ENCODE measurements at regions of chr16 and their contacts with region 1.

Region 1: GRCh38 chr16:48609652-48610029 is 339 bp downstream of the N4BP1 start:
- DNase-seq: no peak
- ATAC-seq: peak; percentile 24
- H3K4me3 Mint-ChIP-seq: no peak overlapping the region
- H3K27ac Mint-ChIP-seq: no peak overlapping the region
- H3K4me1 Mint-ChIP-seq: peaks cover 39% of the 10 kb centered on the region
- H3K27me3 Mint-ChIP-seq: no peaks in the 10 kb centered on the region

Region 2: DNA sequence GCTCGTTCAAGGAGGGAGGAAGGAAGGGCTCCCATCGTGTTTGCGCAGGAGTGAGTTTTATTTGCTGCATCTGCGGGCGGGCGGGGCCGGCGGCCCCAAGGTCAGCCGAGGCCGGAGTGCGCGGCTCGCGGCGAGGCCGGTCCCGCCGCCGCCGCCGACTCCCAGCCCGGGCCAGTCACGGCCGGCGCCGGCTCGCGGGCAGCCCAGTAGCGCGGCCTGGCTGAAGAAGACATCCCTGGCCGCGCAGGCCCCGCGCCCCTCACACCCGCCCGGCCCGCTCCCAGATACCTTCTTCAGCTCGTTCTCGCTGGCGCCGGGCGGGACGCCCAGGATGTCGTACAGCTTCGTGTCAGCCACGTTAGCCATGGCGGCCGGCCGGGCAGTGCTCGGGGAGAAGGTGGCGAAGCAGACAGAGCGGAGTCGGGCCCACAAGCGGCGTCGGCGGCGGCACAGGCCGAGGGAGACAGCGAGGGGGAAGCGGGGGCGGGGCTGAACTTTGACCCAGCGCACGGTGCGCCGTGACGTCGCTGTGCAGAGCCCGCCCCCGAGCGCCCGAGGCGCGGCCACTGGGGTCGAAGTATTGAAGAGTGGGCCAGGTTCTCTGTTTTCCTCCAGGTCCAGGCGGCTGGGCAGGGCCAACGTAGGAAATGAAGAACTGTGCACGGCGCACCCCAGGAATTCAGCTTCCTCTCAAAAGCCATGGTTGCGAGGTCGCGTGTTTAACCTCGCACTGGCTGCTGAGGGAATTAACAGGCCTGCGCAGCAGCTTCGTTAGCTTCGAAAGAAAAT is 1636.2 kb before region 1 on chr16 and contains the start of gene DNAJA2:
- CTCF ChIA-PET with region 1: no interaction called
- POLR2A ChIA-PET with region 1: no interaction called
- intact Hi-C with region 1: loop called in 1 of 2 experiments (anchors 2 kb)
- DNase-seq: peak; percentile 96
- ATAC-seq: peak; percentile 87
- H3K4me3 Mint-ChIP-seq: peak within 1 kb of the TSS; percentile 85
- H3K27ac Mint-ChIP-seq: peak within 1 kb of the TSS; percentile 99
- H3K4me1 Mint-ChIP-seq: peaks cover 56% of the 10 kb centered on the region
- H3K27me3 Mint-ChIP-seq: no peaks in the 10 kb centered on the region
- total RNA-seq, gene DNAJA2: 57.2 to 71.2 TPM

Region 3: DNA sequence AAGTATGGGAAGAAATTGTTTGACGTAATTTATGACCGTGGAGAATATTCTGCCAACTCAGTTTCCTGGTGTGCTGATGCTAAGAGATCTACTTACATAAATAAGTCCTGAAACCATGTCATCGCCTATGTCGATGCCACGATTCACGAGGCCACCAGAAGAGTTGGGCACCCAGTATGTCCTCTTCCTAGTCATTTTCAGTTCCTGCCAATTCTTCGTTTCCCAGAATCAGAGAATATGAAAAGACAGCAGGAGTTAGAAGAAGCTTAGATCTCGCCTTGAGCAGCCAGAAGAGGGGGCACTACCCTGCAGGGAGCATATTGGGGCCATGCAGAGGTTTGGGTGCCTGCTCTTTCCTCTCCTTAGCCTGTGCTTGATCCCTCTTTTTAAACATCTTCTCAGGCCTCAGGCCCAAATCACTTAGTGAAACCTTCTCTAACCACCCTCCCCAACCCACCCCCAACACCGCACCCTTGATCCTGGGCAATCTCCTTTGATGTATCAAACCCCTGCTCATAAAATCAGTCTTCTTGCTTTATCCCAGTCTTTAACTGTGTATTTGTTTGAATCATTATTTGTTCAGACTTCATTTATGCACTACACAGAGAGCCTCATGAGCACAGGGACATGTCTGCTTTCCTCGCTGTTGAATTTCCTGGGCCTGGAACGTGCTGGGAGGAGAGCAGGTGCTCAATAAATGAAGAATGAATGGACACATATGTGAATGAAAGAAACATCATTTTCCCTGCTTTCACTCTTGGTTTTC is 377.7 kb before region 1 on chr16:
- CTCF ChIA-PET with region 1: no interaction called
- POLR2A ChIA-PET with region 1: no interaction called
- intact Hi-C with region 1: loop called in 1 of 2 experiments (anchors 1 kb)
- DNase-seq: peak; percentile 72
- ATAC-seq: peak; percentile 83
- H3K4me3 Mint-ChIP-seq: peak overlapping the region; percentile 20
- H3K27ac Mint-ChIP-seq: peak overlapping the region; percentile 65
- H3K4me1 Mint-ChIP-seq: peaks cover 22% of the 10 kb centered on the region
- H3K27me3 Mint-ChIP-seq: peaks cover 5% of the 10 kb centered on the region

Region 4: GRCh38 chr16:48385272-48386150 is 224.1 kb before region 1 on chr16 and contains the start of gene SIAH1:
- CTCF ChIA-PET with region 1: interaction called, 3 read pairs
- POLR2A ChIA-PET with region 1: interaction called, 3 read pairs
- intact Hi-C with region 1: loop called (anchors 1 to 2 kb)
- DNase-seq: peak; percentile 91
- ATAC-seq: peak; percentile 82
- H3K4me3 Mint-ChIP-seq: peak within 1 kb of the TSS; percentile 85
- H3K27ac Mint-ChIP-seq: peak within 1 kb of the TSS; percentile 90
- H3K4me1 Mint-ChIP-seq: peaks cover 21% of the 10 kb centered on the region
- H3K27me3 Mint-ChIP-seq: no peaks in the 10 kb centered on the region
- total RNA-seq, gene SIAH1: 13.1 to 13.3 TPM

Region 5: DNA sequence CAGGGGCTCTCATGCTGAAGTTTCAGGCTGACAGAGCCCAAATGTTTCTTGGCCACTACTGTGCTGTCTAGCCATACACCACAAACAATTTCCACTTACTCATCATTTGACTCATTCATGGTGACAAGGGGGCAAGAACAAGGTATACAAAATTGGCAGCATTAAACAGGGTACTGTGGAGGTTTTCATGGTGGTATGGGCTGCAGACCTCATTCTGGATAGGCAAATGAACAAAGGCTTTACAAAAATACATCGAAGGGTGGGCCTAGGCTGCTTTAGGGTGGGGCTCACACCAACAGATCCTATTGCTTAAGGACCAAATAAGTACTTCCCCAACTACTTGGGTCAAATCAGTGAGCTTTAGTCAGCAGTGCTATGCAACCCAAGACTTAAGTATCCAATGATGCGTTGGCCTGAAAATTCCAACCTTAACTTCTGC is 52.7 kb before region 1 on chr16:
- CTCF ChIA-PET with region 1: interaction called, 4 read pairs
- POLR2A ChIA-PET with region 1: no interaction called
- intact Hi-C with region 1: loop called (anchors 1 to 2 kb)
- DNase-seq: peak; percentile 52
- ATAC-seq: peak; percentile 89
- H3K4me3 Mint-ChIP-seq: no peak overlapping the region
- H3K27ac Mint-ChIP-seq: peak overlapping the region; percentile 64
- H3K4me1 Mint-ChIP-seq: peaks cover 83% of the 10 kb centered on the region
- H3K27me3 Mint-ChIP-seq: no peaks in the 10 kb centered on the region

Region 6: GRCh38 chr16:48623304-48624016 is 13.8 kb after region 1 on chr16:
- CTCF ChIA-PET with region 1: interaction called, 51 read pairs
- POLR2A ChIA-PET with region 1: interaction called, 15 read pairs
- intact Hi-C with region 1: loop called in 1 of 2 experiments (anchors 1 kb)
- DNase-seq: peak; percentile 90
- ATAC-seq: peak; percentile 97
- H3K4me3 Mint-ChIP-seq: peak overlapping the region; percentile 68
- H3K27ac Mint-ChIP-seq: peak overlapping the region; percentile 77
- H3K4me1 Mint-ChIP-seq: peaks cover 19% of the 10 kb centered on the region
- H3K27me3 Mint-ChIP-seq: no peaks in the 10 kb centered on the region

Region 7: GRCh38 chr16:48676836-48677235 is 67.2 kb after region 1 on chr16:
- CTCF ChIA-PET with region 1: no interaction called
- POLR2A ChIA-PET with region 1: no interaction called
- intact Hi-C with region 1: no loop called
- DNase-seq: no peak
- ATAC-seq: no peak
- H3K4me3 Mint-ChIP-seq: no peak overlapping the region
- H3K27ac Mint-ChIP-seq: no peak overlapping the region
- H3K4me1 Mint-ChIP-seq: no peaks in the 10 kb centered on the region
- H3K27me3 Mint-ChIP-seq: no peaks in the 10 kb centered on the region

Region 8: GRCh38 chr16:49725651-49726050 is 1116.0 kb after region 1 on chr16:
- CTCF ChIA-PET with region 1: no interaction called
- POLR2A ChIA-PET with region 1: no interaction called
- intact Hi-C with region 1: no loop called
- DNase-seq: no peak
- ATAC-seq: no peak
- H3K4me3 Mint-ChIP-seq: no peak overlapping the region
- H3K27ac Mint-ChIP-seq: no peak overlapping the region
- H3K4me1 Mint-ChIP-seq: no peaks in the 10 kb centered on the region
- H3K27me3 Mint-ChIP-seq: peaks cover 2% of the 10 kb centered on the region